ENCODE measurements at regions of chr21 and their contacts with region 1.

Region 1: DNA sequence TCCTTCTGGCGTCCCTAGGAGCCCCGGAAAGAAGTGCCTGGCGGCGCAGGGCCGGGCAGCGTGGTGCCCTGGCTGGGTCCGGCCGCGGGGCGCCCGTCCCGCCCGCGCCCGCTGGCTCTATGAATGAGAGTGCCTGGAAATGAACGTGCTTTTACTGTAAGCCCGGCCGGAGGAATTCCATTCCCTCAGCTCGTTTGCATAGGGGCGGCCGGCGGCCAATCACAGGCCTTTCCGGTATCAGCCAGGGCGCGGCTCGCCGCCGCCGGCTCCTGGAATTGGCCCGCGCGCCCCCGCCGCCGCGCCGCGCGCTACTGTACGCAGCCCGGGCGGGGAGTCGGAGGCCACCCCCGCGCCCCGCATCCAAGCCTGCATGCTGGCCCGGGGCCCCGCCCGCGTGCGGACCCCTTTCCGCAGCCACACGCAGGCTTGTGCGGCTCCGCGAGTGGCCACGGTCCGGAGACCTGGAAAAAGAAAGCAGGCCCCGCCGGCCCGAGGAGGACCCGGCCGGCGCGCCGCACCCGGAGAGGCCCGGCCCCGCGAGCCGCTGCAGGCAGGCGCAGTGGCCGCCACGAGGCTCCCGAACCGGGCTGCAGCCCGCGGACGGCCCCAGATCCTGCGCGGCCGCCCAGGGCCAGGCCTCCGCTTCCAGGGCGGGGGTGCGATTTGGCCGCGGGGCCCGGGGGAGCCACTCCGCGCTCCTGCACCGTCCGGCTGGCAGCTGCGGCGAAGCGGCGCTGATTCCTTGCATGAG is 160.4 kb downstream of the RUNX1 start:
- DNase-seq: peak; percentile 39 to 87 (median 60)
- ATAC-seq: peak; percentile 30
- H3K4me3 ChIP-seq: peak overlapping the region; percentile 80
- H3K4me3 Mint-ChIP-seq: peak overlapping the region; percentile 93
- H3K27ac ChIP-seq: peak overlapping the region; percentile 56 to 79
- H3K27ac Mint-ChIP-seq: peak overlapping the region; percentile 96
- H3K4me1 ChIP-seq: peaks cover 43% of the 10 kb centered on the region
- H3K4me1 Mint-ChIP-seq: peaks cover 66% of the 10 kb centered on the region
- H3K27me3 ChIP-seq: no peaks in the 10 kb centered on the region
- H3K27me3 Mint-ChIP-seq: no peaks in the 10 kb centered on the region
- CTCF ChIP-seq: peak; percentile 3

Region 2: DNA sequence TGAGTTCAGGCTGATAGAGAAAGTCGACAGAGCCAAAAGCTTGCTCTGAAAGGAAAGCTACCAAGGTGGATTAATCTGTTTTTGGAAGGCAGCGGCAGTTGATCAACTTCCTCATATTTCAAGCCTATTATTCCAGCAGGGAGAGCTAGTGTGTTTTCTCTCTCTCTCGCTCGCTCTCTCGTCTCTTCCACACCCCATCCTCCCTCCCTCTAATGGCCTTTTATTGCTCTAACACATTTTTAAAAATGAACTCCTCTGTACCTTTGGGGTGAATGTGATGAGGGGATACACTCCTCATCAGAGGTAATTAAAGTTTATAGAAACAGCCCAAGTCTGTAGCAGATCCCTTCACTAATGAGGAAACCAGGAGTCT is 93.6 kb before region 1 on chr21:
- CTCF ChIA-PET with region 1: no interaction called
- POLR2A ChIA-PET with region 1: no interaction called
- intact Hi-C with region 1: no loop called
- DNase-seq: no peak
- ATAC-seq: no peak
- H3K4me3 ChIP-seq: no peak overlapping the region
- H3K4me3 Mint-ChIP-seq: no peak overlapping the region
- H3K27ac ChIP-seq: no peak overlapping the region
- H3K27ac Mint-ChIP-seq: no peak overlapping the region
- H3K4me1 ChIP-seq: no peaks in the 10 kb centered on the region
- H3K4me1 Mint-ChIP-seq: no peaks in the 10 kb centered on the region
- H3K27me3 ChIP-seq: no peaks in the 10 kb centered on the region
- H3K27me3 Mint-ChIP-seq: no peaks in the 10 kb centered on the region
- CTCF ChIP-seq: no peak

Region 3: GRCh38 chr21:34820051-34820450 is 68.7 kb before region 1 on chr21:
- CTCF ChIA-PET with region 1: no interaction called
- POLR2A ChIA-PET with region 1: no interaction called
- intact Hi-C with region 1: no loop called
- DNase-seq: no peak
- ATAC-seq: no peak
- H3K4me3 ChIP-seq: no peak overlapping the region
- H3K4me3 Mint-ChIP-seq: no peak overlapping the region
- H3K27ac ChIP-seq: no peak overlapping the region
- H3K27ac Mint-ChIP-seq: no peak overlapping the region
- H3K4me1 ChIP-seq: peaks cover 17% of the 10 kb centered on the region
- H3K4me1 Mint-ChIP-seq: peaks cover 32% of the 10 kb centered on the region
- H3K27me3 ChIP-seq: no peaks in the 10 kb centered on the region
- H3K27me3 Mint-ChIP-seq: no peaks in the 10 kb centered on the region
- CTCF ChIP-seq: no peak

Region 4: GRCh38 chr21:34878501-34878900 is 10.2 kb before region 1 on chr21:
- CTCF ChIA-PET with region 1: interaction called, 3 read pairs
- POLR2A ChIA-PET with region 1: interaction called, 11 read pairs
- intact Hi-C with region 1: no loop called
- DNase-seq: no peak
- ATAC-seq: no peak
- H3K4me3 ChIP-seq: no peak overlapping the region
- H3K4me3 Mint-ChIP-seq: no peak overlapping the region
- H3K27ac ChIP-seq: no peak overlapping the region
- H3K27ac Mint-ChIP-seq: peak overlapping the region; percentile 40
- H3K4me1 ChIP-seq: peaks cover 5% of the 10 kb centered on the region
- H3K4me1 Mint-ChIP-seq: peaks cover 51% of the 10 kb centered on the region
- H3K27me3 ChIP-seq: no peaks in the 10 kb centered on the region
- H3K27me3 Mint-ChIP-seq: no peaks in the 10 kb centered on the region
- CTCF ChIP-seq: no peak

Region 5: DNA sequence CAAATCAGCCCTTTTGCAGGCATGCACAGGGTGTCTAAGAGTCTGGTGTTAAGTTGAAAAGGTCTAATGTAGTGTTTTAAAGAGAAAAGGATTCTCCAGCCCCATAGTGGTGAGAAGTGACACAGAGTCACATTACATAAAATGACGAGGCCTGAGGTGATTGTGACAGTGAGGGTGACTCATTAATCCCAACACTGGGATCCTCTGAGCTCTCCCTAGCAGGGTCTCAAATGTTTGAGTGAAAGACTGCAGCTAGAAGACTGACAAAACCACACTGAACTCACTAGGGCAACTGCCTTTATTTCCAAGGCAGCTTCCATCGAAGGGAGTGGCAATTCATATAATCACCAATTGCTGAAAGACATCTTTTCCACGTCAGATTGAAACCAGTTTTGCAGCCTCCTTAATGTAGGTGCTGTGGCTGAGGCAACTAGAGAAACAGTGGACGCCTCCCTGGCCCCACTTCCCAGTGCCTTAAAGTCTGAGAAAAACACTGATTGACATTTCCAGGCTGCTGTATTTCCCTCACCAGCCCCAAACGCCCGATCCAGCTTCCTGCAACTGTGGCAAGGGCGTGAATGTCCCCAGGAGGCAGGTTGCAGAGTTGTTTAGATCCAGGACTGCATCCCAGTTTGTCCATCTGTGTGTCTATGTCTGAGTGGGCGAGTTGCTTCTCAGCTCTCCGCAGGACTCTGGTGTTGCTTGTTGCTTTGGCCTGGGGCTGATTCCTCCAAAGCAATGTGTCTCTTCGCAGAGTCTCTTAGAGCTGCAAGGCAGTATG is 79.0 kb after region 1 on chr21:
- CTCF ChIA-PET with region 1: interaction called, 5 read pairs
- POLR2A ChIA-PET with region 1: no interaction called
- intact Hi-C with region 1: loop called in 1 of 2 experiments (anchors 5 kb)
- DNase-seq: peak in 3 of 14 experiments; percentile 25 to 60 (median 50)
- ATAC-seq: peak; percentile 43
- H3K4me3 ChIP-seq: no peak overlapping the region
- H3K4me3 Mint-ChIP-seq: peak overlapping the region; percentile 64
- H3K27ac ChIP-seq: peak overlapping the region in 1 of 2 donors; percentile 7
- H3K27ac Mint-ChIP-seq: peak overlapping the region; percentile 86
- H3K4me1 ChIP-seq: peaks cover 82% of the 10 kb centered on the region
- H3K4me1 Mint-ChIP-seq: peaks cover 95% of the 10 kb centered on the region
- H3K27me3 ChIP-seq: no peaks in the 10 kb centered on the region
- H3K27me3 Mint-ChIP-seq: no peaks in the 10 kb centered on the region
- CTCF ChIP-seq: no peak

Region 6: DNA sequence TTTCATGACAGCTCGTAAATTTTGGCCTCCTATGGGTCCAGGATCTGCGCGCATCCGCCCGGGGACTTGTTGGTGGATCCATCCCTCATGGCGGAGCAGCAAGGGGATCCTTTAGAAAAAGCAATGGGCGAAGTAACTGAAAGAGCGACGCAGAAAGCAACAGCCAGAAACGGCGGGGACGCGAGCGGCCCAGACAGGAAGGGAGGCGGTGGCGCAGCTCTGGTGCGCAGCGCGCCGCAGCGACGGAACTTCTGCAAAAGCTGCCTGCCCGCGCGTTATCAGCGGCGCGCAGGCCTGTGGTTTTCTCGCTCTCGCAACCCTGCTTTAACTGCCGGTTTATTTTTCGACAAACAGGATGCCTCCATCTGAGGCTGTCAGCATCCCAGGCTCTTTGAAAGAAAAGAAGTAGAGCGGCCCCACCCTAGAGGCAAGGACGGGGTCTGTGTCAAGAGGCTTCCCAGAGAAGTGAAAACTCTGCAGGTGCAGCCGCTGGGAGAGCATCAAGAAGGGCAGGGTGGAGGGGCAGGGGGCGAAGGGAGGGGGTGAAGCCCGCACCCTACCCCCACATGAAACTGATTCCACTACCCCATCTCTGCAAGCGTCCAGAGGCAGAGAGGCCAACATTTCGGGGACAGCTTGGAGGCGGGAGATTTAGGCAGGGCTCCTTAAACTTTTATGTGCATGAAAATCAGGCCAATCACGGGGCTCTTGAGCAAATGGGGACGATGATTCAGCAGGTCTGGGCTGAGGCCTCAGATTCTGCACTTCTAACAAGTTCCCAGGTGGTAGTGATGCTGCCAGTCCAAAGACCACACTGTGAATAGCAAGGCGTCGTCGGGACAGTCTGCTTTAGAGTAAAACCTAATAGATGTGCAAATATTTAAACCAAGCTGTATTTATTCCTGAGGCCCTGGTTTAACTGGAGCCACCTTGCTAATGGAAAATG is 138.1 kb after region 1 on chr21:
- CTCF ChIA-PET with region 1: interaction called, 15 read pairs
- POLR2A ChIA-PET with region 1: interaction called, 44 read pairs
- intact Hi-C with region 1: loop called (anchors 1 to 5 kb)
- DNase-seq: peak; percentile 82 to 96 (median 88)
- ATAC-seq: peak; percentile 82
- H3K4me3 ChIP-seq: peak overlapping the region; percentile 44
- H3K4me3 Mint-ChIP-seq: peak overlapping the region; percentile 82
- H3K27ac ChIP-seq: peak overlapping the region; percentile 52 to 89
- H3K27ac Mint-ChIP-seq: peak overlapping the region; percentile 97
- H3K4me1 ChIP-seq: peaks cover 85% of the 10 kb centered on the region
- H3K4me1 Mint-ChIP-seq: peaks cover 95% of the 10 kb centered on the region
- H3K27me3 ChIP-seq: no peaks in the 10 kb centered on the region
- H3K27me3 Mint-ChIP-seq: no peaks in the 10 kb centered on the region
- CTCF ChIP-seq: no peak

Region 7: DNA sequence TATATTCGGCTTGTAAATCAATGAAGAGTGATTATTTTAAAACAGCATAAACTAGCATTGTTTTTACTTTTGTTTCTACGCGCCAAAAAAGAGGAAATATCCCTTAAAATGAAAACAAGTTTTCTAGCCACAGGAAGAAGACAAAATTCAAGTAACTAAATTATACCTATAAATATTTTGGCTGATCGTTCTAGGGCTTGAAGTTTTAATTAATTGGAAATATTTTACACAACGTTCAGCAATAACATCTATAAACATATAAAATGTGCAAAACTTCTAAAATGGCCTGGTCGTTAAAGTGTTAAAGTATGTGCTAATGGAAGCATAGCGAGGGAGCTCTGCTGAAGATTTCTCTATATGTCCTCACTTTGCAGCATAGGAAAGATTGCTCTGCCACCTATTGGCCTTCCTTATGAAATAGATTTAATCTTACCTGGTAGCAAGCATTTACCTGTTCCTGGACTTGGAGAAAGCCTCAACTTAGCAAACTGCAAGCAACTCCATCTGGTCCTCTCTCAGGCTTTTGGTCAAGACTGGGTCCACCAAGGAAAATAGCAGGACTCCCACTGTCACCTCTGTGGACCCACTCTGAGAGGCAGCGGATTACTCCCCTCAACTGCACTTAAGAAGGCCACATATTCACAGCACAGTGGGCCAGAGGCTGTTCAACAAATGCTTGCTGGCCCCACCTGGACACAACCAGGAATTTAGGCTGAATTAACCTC is 511.7 kb after region 1 on chr21:
- CTCF ChIA-PET with region 1: interaction called, 22 read pairs
- POLR2A ChIA-PET with region 1: interaction called, 10 read pairs
- intact Hi-C with region 1: loop called (anchors 1 kb)
- DNase-seq: peak in 12 of 14 experiments; percentile 3 to 81 (median 21)
- ATAC-seq: peak; percentile 92
- H3K4me3 ChIP-seq: no peak overlapping the region
- H3K4me3 Mint-ChIP-seq: no peak overlapping the region
- H3K27ac ChIP-seq: no peak overlapping the region
- H3K27ac Mint-ChIP-seq: no peak overlapping the region
- H3K4me1 ChIP-seq: peaks cover 3% of the 10 kb centered on the region
- H3K4me1 Mint-ChIP-seq: peaks cover 6% of the 10 kb centered on the region
- H3K27me3 ChIP-seq: no peaks in the 10 kb centered on the region
- H3K27me3 Mint-ChIP-seq: no peaks in the 10 kb centered on the region
- CTCF ChIP-seq: peak; percentile 75

Region 8: DNA sequence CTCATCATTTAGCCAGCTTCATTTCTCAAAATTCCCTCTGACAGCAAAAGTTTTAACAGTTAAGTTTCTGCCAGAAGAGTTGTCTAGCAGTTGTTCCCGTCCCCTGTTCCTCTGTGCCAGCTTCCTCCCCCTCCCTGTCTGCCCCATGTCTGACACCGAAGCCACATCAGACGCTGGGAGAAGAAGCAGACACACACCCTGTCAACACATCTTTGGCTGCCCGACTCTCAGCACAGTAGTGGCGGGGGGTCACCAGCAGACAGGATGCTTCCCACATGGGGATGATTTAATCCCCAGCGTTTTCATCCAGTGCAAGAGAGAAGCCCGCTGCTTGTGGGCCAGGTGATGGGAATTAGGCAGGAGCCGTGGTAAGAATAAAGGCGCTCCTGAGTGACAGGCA is 539.7 kb after region 1 on chr21:
- CTCF ChIA-PET with region 1: no interaction called
- POLR2A ChIA-PET with region 1: no interaction called
- intact Hi-C with region 1: no loop called
- DNase-seq: peak; percentile 18 to 75 (median 59)
- ATAC-seq: peak; percentile 97
- H3K4me3 ChIP-seq: peak overlapping the region; percentile 11
- H3K4me3 Mint-ChIP-seq: peak overlapping the region; percentile 25
- H3K27ac ChIP-seq: no peak overlapping the region
- H3K27ac Mint-ChIP-seq: peak overlapping the region; percentile 70
- H3K4me1 ChIP-seq: peaks cover 11% of the 10 kb centered on the region
- H3K4me1 Mint-ChIP-seq: peaks cover 25% of the 10 kb centered on the region
- H3K27me3 ChIP-seq: peaks cover 3 to 4% of the 10 kb centered on the region in 2 experiments
- H3K27me3 Mint-ChIP-seq: peaks cover 4% of the 10 kb centered on the region
- CTCF ChIP-seq: no peak

Region 9: DNA sequence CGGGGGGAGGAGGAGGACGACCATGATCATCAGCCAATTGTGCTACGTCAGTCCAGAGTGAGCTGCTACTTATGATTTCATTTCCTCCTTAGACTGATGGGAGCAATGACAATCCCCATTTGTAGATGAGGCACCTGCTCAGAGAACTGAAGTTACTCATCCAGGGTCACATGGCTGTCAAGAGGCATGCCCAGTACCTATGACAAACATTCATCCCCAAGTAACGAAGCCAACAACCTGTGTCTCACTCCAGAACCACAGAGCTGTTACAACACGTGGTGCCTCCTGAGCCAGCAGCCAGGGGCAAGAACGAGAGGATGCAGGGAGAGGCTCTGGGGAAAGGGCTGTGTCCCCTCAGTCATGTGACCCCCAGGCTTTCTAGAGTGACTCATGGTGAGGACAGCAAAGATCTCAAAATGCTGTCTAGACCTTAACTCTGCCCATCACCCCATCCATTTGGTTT is 1903.8 kb after region 1 on chr21:
- CTCF ChIA-PET with region 1: no interaction called
- POLR2A ChIA-PET with region 1: no interaction called
- intact Hi-C with region 1: no loop called
- DNase-seq: no peak
- ATAC-seq: no peak
- H3K4me3 ChIP-seq: no peak overlapping the region
- H3K4me3 Mint-ChIP-seq: no peak overlapping the region
- H3K27ac ChIP-seq: no peak overlapping the region
- H3K27ac Mint-ChIP-seq: no peak overlapping the region
- H3K4me1 ChIP-seq: no peaks in the 10 kb centered on the region
- H3K4me1 Mint-ChIP-seq: no peaks in the 10 kb centered on the region
- H3K27me3 ChIP-seq: no peaks in the 10 kb centered on the region
- H3K27me3 Mint-ChIP-seq: no peaks in the 10 kb centered on the region
- CTCF ChIP-seq: no peak